OCI-LY7 (cell line): ENCODE measurements at regions of chr10 and their contacts with region 1.

Region 1: DNA sequence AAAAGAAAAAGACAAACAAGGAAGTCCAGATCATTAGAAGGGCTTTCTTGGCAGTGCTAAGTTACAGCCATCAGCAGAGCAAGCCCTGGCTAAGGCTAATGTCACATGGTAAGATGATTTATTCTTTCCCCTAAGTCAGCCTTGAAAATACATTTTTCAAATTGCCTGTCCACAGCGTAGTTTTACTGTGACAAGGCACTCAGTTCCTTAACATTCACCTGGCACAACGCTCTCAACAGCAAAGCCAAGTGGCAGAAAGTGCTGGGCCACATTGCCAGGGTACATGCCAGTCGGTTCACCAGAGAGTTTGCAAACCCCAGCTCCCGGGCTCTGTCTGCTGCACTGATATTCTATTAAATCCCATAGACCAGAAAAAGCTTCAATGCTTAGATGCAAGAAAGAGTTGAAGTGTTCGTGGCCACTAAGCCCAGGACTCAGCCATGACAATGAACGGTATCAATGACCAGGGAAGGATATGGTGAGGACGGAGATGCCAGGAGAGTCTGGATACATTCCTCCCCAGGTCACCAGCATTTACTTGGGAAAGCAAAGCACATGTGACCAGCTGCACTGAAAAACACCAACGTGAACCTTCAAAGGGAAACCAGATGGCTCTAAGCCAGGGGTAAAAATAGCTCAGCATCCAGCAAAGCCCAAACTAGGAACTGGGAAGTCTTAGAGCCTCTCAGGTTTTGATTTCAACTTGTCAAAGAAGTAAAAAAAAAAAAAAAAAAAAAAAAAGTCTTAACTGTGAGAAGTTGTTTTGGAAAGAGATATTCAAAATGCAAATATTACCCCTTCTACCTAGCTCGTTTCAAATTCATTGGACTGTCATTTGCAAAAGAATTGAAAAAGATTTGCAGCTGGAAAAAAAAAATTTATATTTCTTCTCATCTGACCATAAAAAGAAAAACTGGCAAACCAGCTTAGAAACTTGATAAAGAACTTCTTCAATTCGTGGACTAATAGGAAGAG is 23.9 kb upstream of the MPP7 start:
- DNase-seq: peak; percentile 23
- H3K4me3 ChIP-seq: peak overlapping the region; percentile 11
- H3K27ac ChIP-seq: peak overlapping the region; percentile 21
- H3K4me1 ChIP-seq: peaks cover 54% of the 10 kb centered on the region
- CTCF ChIP-seq: no peak

Region 2: GRCh38 chr10:28263136-28263820 is 63.5 kb before region 1 on chr10:
- CTCF ChIA-PET with region 1: no interaction called
- POLR2A ChIA-PET with region 1: no interaction called
- intact Hi-C with region 1: no loop called
- DNase-seq: no peak
- H3K4me3 ChIP-seq: no peak overlapping the region
- H3K27ac ChIP-seq: no peak overlapping the region
- H3K4me1 ChIP-seq: peaks cover 39% of the 10 kb centered on the region
- CTCF ChIP-seq: no peak

Region 3: GRCh38 chr10:28273343-28273742 is 53.5 kb before region 1 on chr10:
- CTCF ChIA-PET with region 1: no interaction called
- POLR2A ChIA-PET with region 1: no interaction called
- intact Hi-C with region 1: no loop called
- DNase-seq: no peak
- H3K4me3 ChIP-seq: no peak overlapping the region
- H3K27ac ChIP-seq: no peak overlapping the region
- H3K4me1 ChIP-seq: peaks cover 31% of the 10 kb centered on the region
- CTCF ChIP-seq: no peak

Region 4: DNA sequence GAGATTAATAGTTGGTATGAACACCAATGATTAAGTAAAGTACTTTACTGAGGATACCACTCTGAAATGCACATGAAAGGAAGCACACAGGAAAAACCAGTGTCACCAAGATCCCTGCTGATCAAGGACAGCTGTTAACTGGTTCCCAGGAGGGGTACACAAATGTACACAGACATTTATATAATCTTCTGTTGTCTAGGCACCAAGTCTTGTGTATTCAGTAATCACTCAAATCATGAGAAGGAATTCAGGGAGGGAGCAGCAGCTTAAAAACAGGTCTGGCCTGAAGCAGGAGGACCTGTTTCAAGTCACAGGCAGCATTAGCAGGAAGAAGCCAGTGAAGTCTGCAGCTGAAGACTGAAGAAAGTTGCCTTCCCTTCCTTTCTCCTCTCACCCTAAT is 42.7 kb before region 1 on chr10:
- CTCF ChIA-PET with region 1: no interaction called
- POLR2A ChIA-PET with region 1: interaction called, 16 read pairs
- intact Hi-C with region 1: no loop called
- DNase-seq: peak; percentile 45
- H3K4me3 ChIP-seq: peak overlapping the region; percentile 3
- H3K27ac ChIP-seq: peak overlapping the region; percentile 97
- H3K4me1 ChIP-seq: peaks cover 76% of the 10 kb centered on the region
- CTCF ChIP-seq: no peak

Region 5: GRCh38 chr10:28312572-28312971 is 14.2 kb before region 1 on chr10:
- CTCF ChIA-PET with region 1: interaction called, 3 read pairs
- POLR2A ChIA-PET with region 1: interaction called, 31 read pairs
- intact Hi-C with region 1: no loop called
- DNase-seq: no peak
- H3K4me3 ChIP-seq: no peak overlapping the region
- H3K27ac ChIP-seq: no peak overlapping the region
- H3K4me1 ChIP-seq: peaks cover 3% of the 10 kb centered on the region
- CTCF ChIP-seq: no peak

Region 6: GRCh38 chr10:28367929-28368484 is 41.2 kb after region 1 on chr10:
- CTCF ChIA-PET with region 1: interaction called, 4 read pairs
- POLR2A ChIA-PET with region 1: interaction called, 43 read pairs
- intact Hi-C with region 1: no loop called
- DNase-seq: peak; percentile 93
- H3K4me3 ChIP-seq: peak overlapping the region; percentile 1
- H3K27ac ChIP-seq: peak overlapping the region; percentile 92
- H3K4me1 ChIP-seq: peaks cover 41% of the 10 kb centered on the region
- CTCF ChIP-seq: no peak